Colonic mucosa (tissue), 4 donors: ENCODE measurements at regions of chr3 and their contacts with region 1.

Region 1: GRCh38 chr3:66816090-66816761 is 181.9 kb upstream of the KBTBD8 start:
- DNase-seq: no peak
- H3K4me3 ChIP-seq: no peak overlapping the region
- H3K27ac ChIP-seq: no peak overlapping the region
- H3K4me1 ChIP-seq: no peaks in the 10 kb centered on the region
- H3K27me3 ChIP-seq: no peaks in the 10 kb centered on the region
- CTCF ChIP-seq: peak; percentile 51

Region 2: GRCh38 chr3:66253790-66254620 is 562.2 kb before region 1 on chr3:
- intact Hi-C with region 1: loop called (anchors 5 kb)
- DNase-seq: no peak
- H3K4me3 ChIP-seq: no peak overlapping the region
- H3K27ac ChIP-seq: no peak overlapping the region
- H3K4me1 ChIP-seq: no peaks in the 10 kb centered on the region
- H3K27me3 ChIP-seq: no peaks in the 10 kb centered on the region
- CTCF ChIP-seq: peak; percentile 79

Region 3: GRCh38 chr3:66276705-66277274 is 539.4 kb before region 1 on chr3:
- intact Hi-C with region 1: loop called (anchors 5 kb)
- DNase-seq: peak; percentile 75
- H3K4me3 ChIP-seq: no peak overlapping the region
- H3K27ac ChIP-seq: no peak overlapping the region
- H3K4me1 ChIP-seq: no peaks in the 10 kb centered on the region
- H3K27me3 ChIP-seq: no peaks in the 10 kb centered on the region
- CTCF ChIP-seq: peak; percentile 55

Region 4: GRCh38 chr3:66407611-66408218 is 408.5 kb before region 1 on chr3:
- intact Hi-C with region 1: loop called (anchors 5 kb)
- DNase-seq: peak; percentile 85
- H3K4me3 ChIP-seq: no peak overlapping the region
- H3K27ac ChIP-seq: no peak overlapping the region
- H3K4me1 ChIP-seq: peaks cover 6% of the 10 kb centered on the region
- H3K27me3 ChIP-seq: no peaks in the 10 kb centered on the region
- CTCF ChIP-seq: peak; percentile 89

Region 5: GRCh38 chr3:66483406-66483906 is 332.8 kb before region 1 on chr3:
- intact Hi-C with region 1: loop called (anchors 10 kb)
- DNase-seq: no peak
- H3K4me3 ChIP-seq: no peak overlapping the region
- H3K27ac ChIP-seq: peak overlapping the region; percentile 62
- H3K4me1 ChIP-seq: peaks cover 40% of the 10 kb centered on the region
- H3K27me3 ChIP-seq: no peaks in the 10 kb centered on the region
- CTCF ChIP-seq: no peak

Region 6: DNA sequence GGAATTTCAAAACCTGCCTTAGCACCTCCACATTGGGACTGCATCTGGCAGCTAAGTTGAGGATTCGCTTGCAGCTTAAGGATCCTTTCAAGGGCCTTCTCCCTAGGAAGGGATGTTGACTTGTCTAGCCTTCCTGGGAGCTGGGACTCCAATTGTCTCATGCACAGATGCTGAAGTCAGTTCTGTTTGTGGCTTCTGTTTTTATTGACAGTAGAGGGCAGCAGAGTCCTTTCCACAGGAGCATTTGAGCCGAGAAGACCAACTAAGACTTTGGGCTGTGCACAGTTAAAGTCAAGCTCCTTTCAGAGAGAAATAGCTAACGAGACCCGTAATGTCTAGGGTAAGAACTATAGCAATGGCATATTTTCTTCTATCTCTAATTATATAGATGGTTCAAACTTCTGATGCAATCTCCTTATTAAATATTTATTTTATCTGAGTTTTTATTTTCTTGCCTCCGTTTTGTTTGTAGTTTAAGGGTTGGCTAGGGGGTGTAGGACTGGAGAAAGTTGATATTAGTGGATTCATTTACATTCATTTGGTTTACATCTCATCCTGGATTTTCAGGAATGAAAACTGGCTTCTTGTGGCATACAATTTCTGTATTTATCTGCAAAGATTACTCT is 122.2 kb after region 1 on chr3:
- intact Hi-C with region 1: no loop called
- DNase-seq: peak; percentile 58
- H3K4me3 ChIP-seq: no peak overlapping the region
- H3K27ac ChIP-seq: no peak overlapping the region
- H3K4me1 ChIP-seq: no peaks in the 10 kb centered on the region
- H3K27me3 ChIP-seq: no peaks in the 10 kb centered on the region
- CTCF ChIP-seq: peak; percentile 70